ENCODE measurements at regions of chr1 and their contacts with region 1.

Region 1: DNA sequence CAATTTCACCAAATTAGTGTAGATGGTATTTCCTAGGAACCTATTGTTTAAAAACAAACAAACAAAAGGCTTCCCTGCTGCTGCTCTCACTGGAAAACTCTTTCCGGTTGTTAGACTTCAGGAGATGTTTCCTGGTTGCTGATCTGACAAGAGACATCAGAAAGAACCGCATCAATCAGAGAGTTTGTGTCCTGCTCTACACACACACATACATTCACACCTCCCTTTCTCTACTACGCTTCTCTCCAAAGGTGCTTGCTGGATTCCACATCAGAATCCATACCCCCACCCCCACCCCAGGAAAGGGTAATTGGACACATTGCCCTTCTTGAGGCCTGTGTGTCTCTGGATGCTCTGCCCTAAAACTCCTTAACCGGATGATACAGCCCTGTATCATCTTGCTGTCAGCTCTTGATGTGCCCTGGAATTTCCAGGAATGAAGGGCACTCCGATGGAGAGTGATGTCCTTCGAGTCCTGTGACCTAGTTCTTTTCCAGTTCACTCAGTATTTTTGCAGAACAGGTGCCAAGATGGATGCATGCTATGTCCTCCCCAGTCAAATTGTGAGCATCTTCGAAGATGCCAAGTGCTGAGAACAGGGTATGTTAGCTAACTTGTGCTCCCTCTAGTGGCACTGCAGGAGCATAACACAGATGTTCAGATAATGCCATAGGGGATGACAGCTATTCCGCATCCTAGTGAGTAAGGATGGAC is 113.7 kb upstream of the SLC35F3 start:
- DNase-seq: peak; percentile 71
- ATAC-seq: peak; percentile 97
- H3K4me3 ChIP-seq: no peak overlapping the region
- H3K27ac ChIP-seq: no peak overlapping the region
- H3K4me1 ChIP-seq: no peaks in the 10 kb centered on the region
- H3K27me3 ChIP-seq: peaks cover 3% of the 10 kb centered on the region; the same call in 1 of the 2 replicates
- CTCF ChIP-seq: peak; percentile 91

Region 2: GRCh38 chr1:233394860-233395717 is 395.7 kb before region 1 on chr1:
- CTCF ChIA-PET with region 1: interaction called, 5 read pairs
- POLR2A ChIA-PET with region 1: no interaction called
- in situ Hi-C with region 1: no loop called
- intact Hi-C with region 1: loop called (anchors 2 kb)
- DNase-seq: peak; percentile 51
- ATAC-seq: peak; percentile 95
- H3K4me3 ChIP-seq: no peak overlapping the region
- H3K27ac ChIP-seq: no peak overlapping the region
- H3K4me1 ChIP-seq: 0 out of 2 replicates have a peak, but pooled peaks cover 4% of the 10 kb centered on the region
- H3K27me3 ChIP-seq: no peaks in the 10 kb centered on the region
- CTCF ChIP-seq: peak; percentile 81; the same call in 1 of the 2 replicates

Region 3: GRCh38 chr1:233440951-233441401 is 349.8 kb before region 1 on chr1:
- CTCF ChIA-PET with region 1: interaction called, 11 read pairs
- POLR2A ChIA-PET with region 1: no interaction called
- in situ Hi-C with region 1: no loop called
- intact Hi-C with region 1: loop called (anchors 2 kb)
- DNase-seq: peak; percentile 38
- ATAC-seq: peak; percentile 84
- H3K4me3 ChIP-seq: no peak overlapping the region
- H3K27ac ChIP-seq: no peak overlapping the region
- H3K4me1 ChIP-seq: no peaks in the 10 kb centered on the region
- H3K27me3 ChIP-seq: peaks cover 10% of the 10 kb centered on the region; the same call in 1 of the 2 replicates
- CTCF ChIP-seq: peak; percentile 77

Region 4: DNA sequence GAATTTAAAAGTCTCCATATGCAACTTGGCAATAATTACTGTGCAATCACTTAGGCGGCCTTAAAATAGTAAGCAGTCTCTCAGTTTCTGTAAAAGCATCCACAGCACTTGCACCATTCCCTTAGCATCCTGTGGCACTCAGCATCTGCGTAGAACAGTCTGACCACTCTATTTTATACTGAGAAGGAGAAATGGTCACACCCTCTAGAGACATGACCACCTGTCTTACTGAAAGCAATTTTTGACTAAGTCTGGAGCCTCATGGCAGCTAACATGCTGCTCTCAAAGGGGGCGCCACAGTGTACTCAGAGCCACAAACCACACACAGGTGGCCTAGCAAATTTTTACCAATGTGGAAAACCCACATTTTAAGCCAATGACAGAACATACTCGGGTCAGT is 114.9 kb before region 1 on chr1:
- CTCF ChIA-PET with region 1: no interaction called
- POLR2A ChIA-PET with region 1: no interaction called
- in situ Hi-C with region 1: no loop called
- intact Hi-C with region 1: no loop called
- DNase-seq: no peak
- ATAC-seq: no peak
- H3K4me3 ChIP-seq: no peak overlapping the region
- H3K27ac ChIP-seq: no peak overlapping the region
- H3K4me1 ChIP-seq: no peaks in the 10 kb centered on the region
- H3K27me3 ChIP-seq: peaks cover 4% of the 10 kb centered on the region
- CTCF ChIP-seq: peak; percentile 24

Region 5: GRCh38 chr1:233707153-233707879 is 83.5 kb before region 1 on chr1:
- CTCF ChIA-PET with region 1: no interaction called
- POLR2A ChIA-PET with region 1: no interaction called
- in situ Hi-C with region 1: no loop called
- intact Hi-C with region 1: no loop called
- DNase-seq: peak; percentile 8
- ATAC-seq: no peak
- H3K4me3 ChIP-seq: no peak overlapping the region
- H3K27ac ChIP-seq: no peak overlapping the region
- H3K4me1 ChIP-seq: no peaks in the 10 kb centered on the region
- H3K27me3 ChIP-seq: peaks cover 10% of the 10 kb centered on the region
- CTCF ChIP-seq: no peak

Region 6: GRCh38 chr1:233744779-233745513 is 45.9 kb before region 1 on chr1:
- CTCF ChIA-PET with region 1: no interaction called
- POLR2A ChIA-PET with region 1: no interaction called
- in situ Hi-C with region 1: no loop called
- intact Hi-C with region 1: no loop called
- DNase-seq: no peak
- ATAC-seq: no peak
- H3K4me3 ChIP-seq: no peak overlapping the region
- H3K27ac ChIP-seq: no peak overlapping the region
- H3K4me1 ChIP-seq: no peaks in the 10 kb centered on the region
- H3K27me3 ChIP-seq: peaks cover 7% of the 10 kb centered on the region; the same call in 1 of the 2 replicates
- CTCF ChIP-seq: no peak